Posterior cingulate gyrus (tissue), 11 donors: ENCODE measurements at regions of chr10 and their contacts with region 1.

Region 1: GRCh38 chr10:15097011-15097812 is at the start of gene RPP38:
- DNase-seq: peak; percentile 96 to 100 (median 99)

Region 2: DNA sequence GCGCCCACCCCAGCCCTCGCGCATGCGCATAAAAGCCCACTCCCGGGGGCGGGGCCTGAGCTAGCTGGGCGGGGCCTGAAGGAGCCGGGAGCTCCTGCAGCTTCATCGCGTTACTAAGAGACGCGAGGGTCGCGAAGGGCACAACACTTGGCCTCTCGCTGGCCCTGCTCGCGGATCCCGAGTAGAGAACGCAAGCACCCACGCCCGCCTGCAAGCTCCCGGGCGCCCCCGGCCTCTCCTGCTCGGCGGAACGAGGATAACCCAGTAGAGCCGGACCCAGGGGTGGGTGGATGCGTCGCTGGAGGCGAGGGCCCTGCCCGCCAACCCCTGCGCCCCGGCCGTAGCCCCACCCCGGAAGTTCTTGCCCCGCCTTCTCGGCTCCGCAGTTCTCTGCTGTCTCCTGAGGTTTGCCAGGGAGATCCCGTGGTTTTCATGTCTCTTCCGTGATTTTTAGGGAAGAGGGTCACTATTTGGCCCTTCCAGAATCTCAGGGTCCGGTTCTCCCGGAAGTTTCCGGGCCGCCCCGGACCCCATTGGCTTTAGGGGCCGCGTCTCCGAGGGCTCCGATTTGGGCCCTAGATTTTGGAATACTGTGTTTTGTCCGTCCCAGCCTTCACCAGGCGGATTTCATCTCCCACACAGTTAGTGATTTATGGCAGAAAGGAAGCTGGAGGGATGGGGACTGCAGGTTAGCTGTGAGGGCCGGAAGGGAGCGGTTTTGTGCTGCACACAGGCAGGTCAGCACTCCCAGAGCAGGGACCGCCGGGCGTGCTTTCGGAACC is 137.7 kb before region 1 on chr10 and contains the start of gene MEIG1:
- intact Hi-C with region 1: loop called (anchors 5 kb)
- DNase-seq: peak; percentile 91 to 99 (median 96)

Region 3: GRCh38 chr10:15168781-15169554 is 71.8 kb after region 1 on chr10:
- intact Hi-C with region 1: loop called (anchors 5 kb)
- DNase-seq: peak; percentile 91 to 99 (median 97)